Breast epithelium (tissue), 4 donors: ENCODE measurements at regions of chr2 and their contacts with region 1.

Region 1: GRCh38 chr2:180115675-180116074 is 108.6 kb upstream of the CWC22 start:
- DNase-seq: no peak
- H3K4me3 ChIP-seq: no peak overlapping the region
- H3K27ac ChIP-seq: no peak overlapping the region
- H3K4me1 ChIP-seq: no peaks in the 10 kb centered on the region
- H3K27me3 ChIP-seq: no peaks in the 10 kb centered on the region
- CTCF ChIP-seq: no peak
- POLR2A ChIP-seq: no peak

Region 2: GRCh38 chr2:180075870-180076269 is 39.8 kb before region 1 on chr2:
- intact Hi-C with region 1: loop called (anchors 2 kb)
- DNase-seq: no peak
- H3K4me3 ChIP-seq: no peak overlapping the region
- H3K27ac ChIP-seq: no peak overlapping the region
- H3K4me1 ChIP-seq: no peaks in the 10 kb centered on the region
- H3K27me3 ChIP-seq: no peaks in the 10 kb centered on the region
- CTCF ChIP-seq: no peak
- POLR2A ChIP-seq: no peak

Region 3: GRCh38 chr2:181117206-181117925 is 1001.7 kb after region 1 on chr2:
- intact Hi-C with region 1: loop called (anchors 5 kb)
- DNase-seq: no peak
- H3K4me3 ChIP-seq: no peak overlapping the region
- H3K27ac ChIP-seq: no peak overlapping the region
- H3K4me1 ChIP-seq: no peaks in the 10 kb centered on the region
- H3K27me3 ChIP-seq: no peaks in the 10 kb centered on the region
- CTCF ChIP-seq: no peak
- POLR2A ChIP-seq: no peak